ENCODE measurements at regions of chr3 and their contacts with region 1.

Region 1: DNA sequence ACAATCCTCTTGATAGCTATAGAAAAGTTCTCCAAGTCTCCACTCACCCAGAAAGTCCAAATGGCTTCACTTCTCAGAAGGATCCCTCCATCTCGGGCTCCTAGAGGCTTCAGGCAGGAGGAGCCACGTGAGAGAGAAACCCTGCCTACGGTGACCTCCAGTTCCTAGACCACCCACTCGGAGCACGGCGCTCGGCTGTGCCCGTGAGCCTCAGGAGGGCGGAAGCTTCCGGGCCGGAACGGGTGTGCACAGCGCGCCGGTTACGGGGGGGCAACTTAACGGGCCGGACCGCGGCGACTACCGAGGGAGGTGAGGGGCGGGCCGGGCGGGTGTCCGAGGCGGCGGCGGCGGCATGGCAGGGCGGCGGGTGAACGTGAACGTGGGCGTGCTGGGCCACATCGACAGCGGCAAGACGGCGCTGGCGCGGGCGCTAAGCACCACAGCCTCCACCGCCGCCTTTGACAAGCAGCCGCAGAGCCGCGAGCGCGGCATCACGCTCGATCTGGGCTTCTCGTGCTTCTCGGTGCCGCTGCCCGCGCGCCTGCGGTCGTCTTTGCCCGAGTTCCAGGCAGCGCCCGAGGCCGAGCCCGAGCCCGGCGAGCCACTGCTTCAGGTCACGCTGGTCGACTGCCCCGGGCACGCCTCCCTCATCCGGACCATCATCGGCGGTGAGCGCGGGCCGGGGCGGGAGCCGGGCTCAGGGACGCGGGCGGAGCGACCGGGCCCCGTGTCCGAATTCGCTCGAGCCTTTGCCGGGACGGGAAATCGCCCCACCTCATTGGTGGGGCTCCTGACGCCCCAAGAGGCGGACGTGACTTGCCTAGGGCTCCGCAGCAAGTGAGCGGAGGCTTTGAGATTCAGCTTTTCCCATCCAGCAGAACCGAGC is at the start of gene EEFSEC:
- ATAC-seq: peak; percentile 94 to 98 (median 96)
- H3K4me3 ChIP-seq: peak within 1 kb of the TSS; percentile 73 to 95 (median 87)
- H3K27ac ChIP-seq: peak within 1 kb of the TSS; percentile 79 to 82
- H3K4me1 ChIP-seq: peaks cover 6% of the 10 kb centered on the region in 2 donors
- total RNA-seq, gene EEFSEC: 5.8 to 20.7 (median 9.5) TPM

Region 2: DNA sequence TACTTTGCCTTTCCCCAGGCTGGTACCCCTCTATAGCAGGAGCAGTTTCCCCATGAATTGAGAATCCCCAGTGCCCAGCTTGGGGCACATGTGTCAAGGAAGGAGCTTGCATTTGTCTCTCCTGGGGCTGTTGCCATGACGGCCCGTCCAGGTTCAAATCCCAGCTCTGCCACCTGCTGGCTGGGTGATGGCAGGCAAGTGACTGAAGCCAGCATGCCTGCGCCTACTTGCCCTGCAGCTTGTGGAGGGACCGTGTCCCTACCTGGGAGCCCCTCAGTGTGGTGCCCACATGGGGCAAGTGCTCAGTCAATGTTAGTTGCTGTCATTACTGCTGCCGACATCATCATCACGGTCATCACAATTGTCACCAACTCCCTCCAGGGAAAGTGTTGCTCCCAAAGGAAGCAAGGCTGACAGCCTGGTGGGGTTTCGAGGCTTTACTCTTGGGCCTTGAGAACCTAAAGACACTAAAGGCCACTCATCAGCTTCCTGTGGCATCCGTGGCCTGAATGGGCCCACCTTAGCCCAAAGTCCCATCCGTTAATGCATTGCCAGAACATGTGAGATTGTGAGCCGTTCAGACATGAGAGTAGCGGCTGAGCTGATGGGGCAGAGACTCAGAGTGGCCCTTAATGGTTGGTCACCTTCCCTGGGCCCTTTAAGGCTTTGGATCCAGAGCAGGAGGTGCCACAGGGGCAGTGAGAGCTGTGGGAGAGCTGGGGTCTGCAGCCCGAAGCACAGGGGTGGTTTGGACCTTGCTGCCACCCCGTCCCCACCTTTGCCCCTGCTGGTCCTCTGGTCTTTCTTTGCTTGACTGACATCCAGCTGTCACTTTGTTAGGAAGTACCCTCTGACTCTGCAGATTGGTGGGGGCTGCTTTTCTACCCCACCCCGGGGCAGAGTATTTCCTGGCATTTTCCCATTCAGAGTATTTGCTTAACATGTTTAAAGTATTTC is 168.9 kb after region 1 on chr3:
- in situ Hi-C with region 1: loop called in 1 of 9 experiments (anchors 25 kb)
- ATAC-seq: peak in 5 of 8 experiments; percentile 18 to 60 (median 39)
- H3K4me3 ChIP-seq: no peak overlapping the region
- H3K27ac ChIP-seq: no peak overlapping the region
- H3K4me1 ChIP-seq: peaks cover 6 to 10% of the 10 kb centered on the region in 2 donors

Region 3: GRCh38 chr3:128572644-128573105 is 419.3 kb after region 1 on chr3:
- in situ Hi-C with region 1: loop called in 2 of 9 experiments (anchors 25 kb)
- ATAC-seq: peak in 1 of 8 experiments; percentile 79
- H3K4me3 ChIP-seq: no peak overlapping the region
- H3K27ac ChIP-seq: no peak overlapping the region
- H3K4me1 ChIP-seq: no peaks in the 10 kb centered on the region

Region 4: GRCh38 chr3:128584412-128585020 is 431.1 kb after region 1 on chr3:
- in situ Hi-C with region 1: loop called in 1 of 9 experiments (anchors 25 kb)
- ATAC-seq: peak; percentile 69 to 100 (median 99)
- H3K4me3 ChIP-seq: no peak overlapping the region
- H3K27ac ChIP-seq: no peak overlapping the region
- H3K4me1 ChIP-seq: no peaks in the 10 kb centered on the region